ENCODE measurements at regions of chr4 and their contacts with region 1.

Region 1: GRCh38 chr4:82217986-82218715 is 155.6 kb downstream of the HNRNPD start:
- DNase-seq: peak in 3 of 9 experiments; percentile 8 to 33 (median 18)
- ATAC-seq: no peak
- H3K4me3 ChIP-seq: no peak overlapping the region
- H3K4me3 Mint-ChIP-seq: no peak overlapping the region
- H3K27ac ChIP-seq: no peak overlapping the region
- H3K27ac Mint-ChIP-seq: no peak overlapping the region
- H3K4me1 ChIP-seq: peaks cover 13% of the 10 kb centered on the region
- H3K4me1 Mint-ChIP-seq: peaks cover 27% of the 10 kb centered on the region
- H3K27me3 ChIP-seq: no peaks in the 10 kb centered on the region
- H3K27me3 Mint-ChIP-seq: no peaks in the 10 kb centered on the region
- CTCF ChIP-seq: no peak

Region 2: GRCh38 chr4:82123934-82124333 is 94.2 kb before region 1 on chr4:
- CTCF ChIA-PET with region 1: interaction called, 6 read pairs
- POLR2A ChIA-PET with region 1: no interaction called
- intact Hi-C with region 1: loop called in 1 of 2 experiments (anchors 1 kb)
- DNase-seq: peak in 3 of 9 experiments; percentile 32 to 43 (median 38)
- ATAC-seq: peak; percentile 54
- H3K4me3 ChIP-seq: no peak overlapping the region
- H3K4me3 Mint-ChIP-seq: no peak overlapping the region
- H3K27ac ChIP-seq: no peak overlapping the region
- H3K27ac Mint-ChIP-seq: no peak overlapping the region
- H3K4me1 ChIP-seq: no peaks in the 10 kb centered on the region
- H3K4me1 Mint-ChIP-seq: peaks cover 6% of the 10 kb centered on the region
- H3K27me3 ChIP-seq: no peaks in the 10 kb centered on the region
- H3K27me3 Mint-ChIP-seq: no peaks in the 10 kb centered on the region
- CTCF ChIP-seq: no peak

Region 3: DNA sequence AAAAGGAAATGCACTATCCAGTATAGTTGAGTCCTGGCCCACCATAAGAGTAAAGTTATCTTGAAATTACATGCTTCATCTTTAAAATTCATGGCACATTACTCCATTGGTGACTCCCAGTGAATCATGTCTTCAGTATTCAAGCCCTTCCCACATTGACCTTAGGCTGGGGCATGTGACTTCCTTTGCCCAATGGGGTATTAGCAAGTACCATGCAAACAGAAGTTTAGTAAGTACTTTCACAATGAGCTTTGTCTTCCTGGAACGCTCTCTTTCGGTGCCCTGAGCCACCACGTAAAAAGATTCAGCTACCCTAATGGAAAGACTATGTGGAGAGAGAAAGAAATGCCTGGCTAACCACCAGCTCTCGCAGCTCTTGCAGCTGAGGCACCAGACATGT is 79.8 kb before region 1 on chr4:
- CTCF ChIA-PET with region 1: no interaction called
- POLR2A ChIA-PET with region 1: no interaction called
- intact Hi-C with region 1: loop called in 1 of 2 experiments (anchors 5 kb)
- DNase-seq: no peak
- ATAC-seq: no peak
- H3K4me3 ChIP-seq: no peak overlapping the region
- H3K4me3 Mint-ChIP-seq: no peak overlapping the region
- H3K27ac ChIP-seq: no peak overlapping the region
- H3K27ac Mint-ChIP-seq: no peak overlapping the region
- H3K4me1 ChIP-seq: peaks cover 16% of the 10 kb centered on the region
- H3K4me1 Mint-ChIP-seq: peaks cover 32% of the 10 kb centered on the region
- H3K27me3 ChIP-seq: peaks cover 0 to 2% of the 10 kb centered on the region in 2 experiments
- H3K27me3 Mint-ChIP-seq: no peaks in the 10 kb centered on the region
- CTCF ChIP-seq: no peak

Region 4: GRCh38 chr4:82360298-82361177 is 142.4 kb after region 1 on chr4:
- CTCF ChIA-PET with region 1: no interaction called
- POLR2A ChIA-PET with region 1: no interaction called
- intact Hi-C with region 1: loop called in 1 of 2 experiments (anchors 5 kb)
- DNase-seq: peak in 2 of 9 experiments; percentile 51 to 59
- ATAC-seq: peak; percentile 75
- H3K4me3 ChIP-seq: no peak overlapping the region
- H3K4me3 Mint-ChIP-seq: peak overlapping the region; percentile 1
- H3K27ac ChIP-seq: peak overlapping the region in 1 of 2 experiments; percentile 21
- H3K27ac Mint-ChIP-seq: peak overlapping the region; percentile 15
- H3K4me1 ChIP-seq: peaks cover 92% of the 10 kb centered on the region
- H3K4me1 Mint-ChIP-seq: peaks cover 91% of the 10 kb centered on the region
- H3K27me3 ChIP-seq: no peaks in the 10 kb centered on the region
- H3K27me3 Mint-ChIP-seq: no peaks in the 10 kb centered on the region
- CTCF ChIP-seq: peak; percentile 56